IMR-90 (cell line): ENCODE measurements at regions of chr4 and their contacts with region 1.

Region 1: GRCh38 chr4:110361921-110362320 is 114.0 kb upstream of the ENPEP start:
- DNase-seq: no peak
- ATAC-seq: no peak
- H3K4me3 ChIP-seq: no peak overlapping the region
- H3K27ac ChIP-seq: no peak overlapping the region
- H3K4me1 ChIP-seq: no peaks in the 10 kb centered on the region
- H3K27me3 ChIP-seq: no peaks in the 10 kb centered on the region
- CTCF ChIP-seq: no peak
- POLR2A ChIP-seq: no peak
- RAD21 ChIP-seq: no peak

Region 2: DNA sequence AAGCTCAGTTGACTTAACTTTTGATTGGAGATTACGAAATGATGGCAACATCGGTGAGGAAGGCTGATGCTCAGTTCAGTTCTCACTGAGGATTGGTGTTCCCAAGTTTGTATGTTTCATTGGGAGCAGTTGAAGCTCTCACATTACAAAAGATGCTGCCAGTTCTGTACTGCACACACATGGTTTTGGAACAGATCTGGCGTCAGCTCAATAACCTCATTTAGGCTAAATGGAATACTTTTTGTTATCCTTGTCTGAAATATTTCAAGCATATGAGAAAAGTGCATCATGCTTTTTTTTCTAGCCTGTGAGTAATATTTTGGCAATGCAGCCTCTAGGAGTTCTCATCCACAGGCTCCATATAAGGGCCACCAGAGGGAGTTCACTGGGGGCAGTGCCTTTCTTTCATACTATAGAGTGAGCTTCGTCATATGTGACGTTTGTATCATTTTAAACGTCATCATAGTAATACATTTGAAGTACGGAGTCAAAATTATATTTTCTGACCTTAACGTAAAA is 118.2 kb after region 1 on chr4:
- CTCF ChIA-PET with region 1: no interaction called
- POLR2A ChIA-PET with region 1: interaction called, 14 read pairs
- dilution Hi-C with region 1: no loop called
- in situ Hi-C with region 1: no loop called
- intact Hi-C with region 1: no loop called
- DNase-seq: peak; percentile 94
- ATAC-seq: peak; percentile 82
- H3K4me3 ChIP-seq: no peak overlapping the region
- H3K27ac ChIP-seq: no peak overlapping the region
- H3K4me1 ChIP-seq: no peaks in the 10 kb centered on the region
- H3K27me3 ChIP-seq: no peaks in the 10 kb centered on the region
- CTCF ChIP-seq: peak; percentile 25; the same call in 1 of the 2 replicates
- POLR2A ChIP-seq: no peak
- RAD21 ChIP-seq: no peak

Region 3: DNA sequence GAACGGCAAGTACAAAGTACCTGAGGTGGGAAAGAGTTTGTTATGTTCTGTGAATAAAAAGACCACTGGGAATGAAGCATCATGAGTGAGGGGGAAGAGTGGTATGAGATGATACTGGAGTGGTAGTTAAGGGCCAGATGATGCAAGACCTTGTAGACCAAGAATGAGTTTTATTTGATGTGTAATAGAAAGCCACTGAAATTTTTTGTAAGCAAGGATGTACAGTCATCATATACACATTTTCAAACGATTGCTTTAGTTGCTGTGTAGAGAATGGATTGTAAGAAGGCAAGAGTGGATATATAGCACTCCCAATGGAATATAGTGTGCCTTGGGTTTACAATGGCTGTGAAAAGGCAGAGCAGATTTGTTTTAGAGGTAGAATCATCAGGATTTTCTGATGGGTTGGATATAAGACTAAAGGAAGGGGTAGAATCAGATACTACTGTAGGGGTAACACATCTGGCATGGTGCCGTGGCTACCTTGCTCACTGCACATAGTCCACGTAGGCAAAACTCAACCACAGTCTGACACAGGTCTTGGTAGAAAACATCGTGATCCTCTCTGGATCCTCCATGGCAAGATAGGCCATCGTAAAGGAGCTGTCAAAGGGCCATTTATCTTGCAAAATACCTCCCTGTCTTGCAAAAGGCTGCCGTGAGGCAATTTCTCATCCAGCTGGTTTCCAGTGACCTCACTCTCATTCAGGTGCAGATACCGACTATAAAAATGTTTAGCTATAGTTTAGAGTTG is 1908.9 kb after region 1 on chr4:
- CTCF ChIA-PET with region 1: no interaction called
- POLR2A ChIA-PET with region 1: no interaction called
- dilution Hi-C with region 1: no loop called
- in situ Hi-C with region 1: no loop called
- intact Hi-C with region 1: no loop called
- DNase-seq: peak; percentile 93
- ATAC-seq: peak; percentile 81
- H3K4me3 ChIP-seq: no peak overlapping the region
- H3K27ac ChIP-seq: peak overlapping the region; percentile 25; the same call in 1 of the 2 replicates
- H3K4me1 ChIP-seq: peaks cover 3% of the 10 kb centered on the region
- H3K27me3 ChIP-seq: no peaks in the 10 kb centered on the region
- CTCF ChIP-seq: no peak
- POLR2A ChIP-seq: no peak
- RAD21 ChIP-seq: no peak